Activated T-helper 1 cell treated with anti-CD3 and anti-CD28 coated beads, Interleukin-12 subunit alpha, Interleukin-12 subunit beta, Interleukin-2, Interleukin-4 antibody, amounts not matched to agents 30 ng/mL and 10 ng/mL and 1 ng/mL, durations not matched to agents 14 hours and 24 hours and 36 hours (primary cell): ENCODE measurements at regions of chr16 and their contacts with region 1.

Region 1: DNA sequence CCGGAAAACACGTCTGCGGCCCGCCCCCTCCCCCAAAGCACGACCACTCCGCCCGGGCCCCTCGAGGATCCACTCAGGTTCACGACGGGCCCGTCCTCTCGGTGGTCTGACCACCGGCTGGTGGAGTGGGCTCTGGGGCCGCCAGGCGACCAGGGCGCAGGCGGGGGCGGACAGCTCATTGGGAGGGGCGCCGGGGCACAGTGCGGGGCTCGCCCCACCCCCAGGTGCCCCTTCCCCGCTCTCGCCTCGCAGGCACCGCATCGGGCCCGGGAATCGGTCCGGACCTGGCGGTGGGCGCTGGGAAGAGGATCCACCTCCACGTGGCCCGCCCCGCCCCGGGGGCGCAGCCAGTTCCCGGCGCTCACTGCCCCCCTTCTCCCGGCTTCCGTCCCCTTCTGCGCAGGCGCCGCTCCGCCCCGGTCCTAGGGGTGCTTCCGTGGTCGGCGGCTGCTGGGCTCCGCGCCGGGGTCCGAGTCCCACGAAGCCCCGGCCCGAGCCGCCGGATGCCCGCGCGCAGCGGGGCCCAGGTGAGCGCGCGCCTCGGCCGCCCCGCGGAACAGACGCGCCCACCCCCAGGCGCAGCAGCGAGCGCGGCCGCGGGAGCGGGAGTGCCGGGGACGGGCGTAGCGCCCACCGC is at the start of gene MPG:
- DNase-seq: peak; percentile 86
- H3K4me3 Mint-ChIP-seq: peak within 1 kb of the TSS; percentile 90
- H3K27ac Mint-ChIP-seq: peak within 1 kb of the TSS; percentile 78
- H3K4me1 Mint-ChIP-seq: peaks cover 25% of the 10 kb centered on the region
- H3K27me3 Mint-ChIP-seq: peaks cover 17% of the 10 kb centered on the region
- total RNA-seq, gene MPG: 73.9 and 77.5 TPM in 2 replicates

Region 2: DNA sequence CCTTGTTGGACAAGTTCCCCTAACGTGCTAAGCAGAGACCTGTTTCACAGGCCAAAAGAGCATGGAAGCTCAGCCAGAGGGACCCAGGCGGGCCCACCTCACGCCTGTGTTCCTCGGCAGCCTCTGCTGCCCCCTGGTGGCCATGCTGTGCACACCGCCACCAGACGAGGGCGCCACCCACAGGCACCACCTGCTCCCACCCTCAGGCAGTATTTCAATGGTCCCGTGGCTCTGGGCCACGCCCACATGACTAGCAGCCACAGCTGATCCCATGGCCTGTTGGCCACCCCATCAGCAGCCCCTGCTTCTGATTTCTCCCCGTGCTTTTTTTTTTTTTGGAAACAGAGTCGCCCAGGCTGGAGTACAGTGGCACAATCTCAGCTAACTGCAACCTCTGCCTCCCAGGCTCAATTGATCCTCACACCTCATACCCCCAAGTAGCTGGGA is 19.0 kb after region 1 on chr16:
- intact Hi-C with region 1: loop called (anchors 2 kb)
- DNase-seq: peak; percentile 86
- H3K4me3 Mint-ChIP-seq: no peak overlapping the region
- H3K27ac Mint-ChIP-seq: peak overlapping the region; percentile 48
- H3K4me1 Mint-ChIP-seq: no peaks in the 10 kb centered on the region
- H3K27me3 Mint-ChIP-seq: no peaks in the 10 kb centered on the region

Region 3: GRCh38 chr16:117379-118365 is 39.7 kb after region 1 on chr16:
- intact Hi-C with region 1: no loop called
- DNase-seq: peak; percentile 42
- H3K4me3 Mint-ChIP-seq: no peak overlapping the region
- H3K27ac Mint-ChIP-seq: no peak overlapping the region
- H3K4me1 Mint-ChIP-seq: peaks cover 12% of the 10 kb centered on the region
- H3K27me3 Mint-ChIP-seq: no peaks in the 10 kb centered on the region